ENCODE measurements at regions of chr17 and their contacts with region 1.

Region 1: DNA sequence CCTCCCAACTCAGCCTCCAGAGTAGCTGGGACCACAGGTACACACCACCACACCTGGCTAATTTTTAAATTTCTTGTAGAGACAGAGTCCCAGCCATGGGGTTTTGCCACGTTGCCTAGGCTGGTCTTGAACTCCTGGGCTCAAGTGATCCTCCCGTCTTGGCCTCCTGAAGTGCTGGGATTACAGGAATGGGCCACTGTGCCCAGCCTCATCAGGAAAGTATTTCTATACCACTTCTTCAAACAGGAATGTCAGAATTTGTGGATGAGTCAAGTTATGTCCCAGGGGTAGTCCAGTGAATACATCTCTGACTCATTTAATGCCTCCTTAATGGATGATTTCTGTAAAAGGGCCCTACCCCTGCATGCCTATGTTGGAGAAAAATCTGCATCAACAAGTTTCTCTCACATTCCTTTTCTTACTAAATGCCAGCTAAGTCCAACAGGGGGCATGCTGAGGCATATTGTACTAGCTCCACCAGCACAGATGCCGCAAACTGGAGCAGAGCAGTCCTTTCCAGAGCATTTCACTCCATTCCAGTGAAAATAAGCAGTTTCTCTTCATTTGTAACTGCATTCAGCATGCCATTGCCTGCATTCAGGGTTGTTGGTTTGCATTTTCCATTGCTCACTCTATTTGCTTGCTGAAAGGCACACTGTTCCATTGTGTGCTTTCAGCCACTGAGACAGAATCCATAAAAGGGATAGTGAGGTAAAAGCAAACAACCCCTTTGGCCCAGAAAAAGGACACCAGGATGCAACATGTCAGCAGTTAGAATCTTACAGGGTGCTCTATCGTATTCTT is 5.3 kb upstream of the CAVIN1 start:
- DNase-seq: peak; percentile 97 to 98
- ATAC-seq: peak; percentile 91 to 96
- H3K4me3 ChIP-seq: no peak overlapping the region
- H3K27ac ChIP-seq: peak overlapping the region; percentile 66 to 83
- H3K4me1 ChIP-seq: peaks cover 55% of the 10 kb centered on the region
- CTCF ChIP-seq: peak; percentile 84
- EP300 ChIP-seq: no peak
- POLR2A ChIP-seq: no peak
- RAD21 ChIP-seq: peak; percentile 84 to 86

Region 2: GRCh38 chr17:41792845-41793783 is 635.2 kb before region 1 on chr17:
- CTCF ChIA-PET with region 1: no interaction called
- POLR2A ChIA-PET with region 1: no interaction called
- DNase-seq: peak; percentile 68 to 93
- ATAC-seq: peak; percentile 86 to 89
- H3K4me3 ChIP-seq: peak overlapping the region; percentile 20
- H3K27ac ChIP-seq: peak overlapping the region; percentile 86 to 92
- H3K4me1 ChIP-seq: peaks cover 49% of the 10 kb centered on the region
- CTCF ChIP-seq: no peak
- EP300 ChIP-seq: no peak
- POLR2A ChIP-seq: peak; percentile 33
- RAD21 ChIP-seq: no peak

Region 3: GRCh38 chr17:42438600-42439567 is 10.5 kb after region 1 on chr17:
- CTCF ChIA-PET with region 1: interaction called, 13 read pairs
- POLR2A ChIA-PET with region 1: interaction called, 4 read pairs
- DNase-seq: no peak
- ATAC-seq: peak in 1 of 2 experiments; percentile 77; a peak in 3 of 6 replicates
- H3K4me3 ChIP-seq: no peak overlapping the region
- H3K27ac ChIP-seq: no peak overlapping the region
- H3K4me1 ChIP-seq: peaks cover 15% of the 10 kb centered on the region
- CTCF ChIP-seq: peak; percentile 45
- EP300 ChIP-seq: no peak
- POLR2A ChIP-seq: no peak
- RAD21 ChIP-seq: peak; percentile 37 to 55; a peak in 4 of 5 replicates

Region 4: DNA sequence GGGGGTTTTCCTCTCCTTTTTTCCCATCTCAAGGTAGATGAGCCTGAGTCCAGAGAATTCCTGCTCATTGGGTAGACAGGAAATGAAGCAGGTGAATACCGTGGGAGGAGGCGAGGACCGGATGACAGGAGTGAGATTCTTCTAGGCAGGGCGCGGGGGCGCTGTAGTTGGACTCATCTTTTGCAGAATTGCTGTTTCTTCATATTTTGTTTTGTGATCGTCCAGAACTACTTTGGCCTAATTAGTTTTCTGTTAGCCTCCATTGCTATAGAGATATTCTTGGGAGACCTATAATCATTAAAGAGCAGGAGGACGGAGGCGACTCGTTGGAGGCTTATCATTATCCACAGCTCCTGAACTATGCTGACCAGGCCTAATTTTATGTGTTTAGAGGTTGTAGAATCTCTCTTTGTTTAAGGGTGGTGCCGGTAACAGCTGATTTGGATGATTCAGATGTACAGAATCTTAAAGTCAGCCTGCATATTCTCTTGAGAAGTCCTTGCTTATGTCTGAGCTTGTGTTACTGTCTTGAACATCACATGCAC is 31.0 kb after region 1 on chr17:
- CTCF ChIA-PET with region 1: interaction called, 17 read pairs
- POLR2A ChIA-PET with region 1: interaction called, 11 read pairs
- DNase-seq: peak; percentile 68 to 74
- ATAC-seq: peak; percentile 77 to 79
- H3K4me3 ChIP-seq: peak overlapping the region; percentile 83
- H3K27ac ChIP-seq: peak overlapping the region; percentile 84 to 88
- H3K4me1 ChIP-seq: peaks cover 48% of the 10 kb centered on the region
- CTCF ChIP-seq: peak; percentile 79
- EP300 ChIP-seq: no peak
- POLR2A ChIP-seq: no peak
- RAD21 ChIP-seq: 0 out of 5 replicates have a peak, but pooled peaks of 1 of the 2 experiments have one; percentile 22